Ovary (tissue), 10 donors: ENCODE measurements at regions of chr18 and their contacts with region 1.

Region 1: DNA sequence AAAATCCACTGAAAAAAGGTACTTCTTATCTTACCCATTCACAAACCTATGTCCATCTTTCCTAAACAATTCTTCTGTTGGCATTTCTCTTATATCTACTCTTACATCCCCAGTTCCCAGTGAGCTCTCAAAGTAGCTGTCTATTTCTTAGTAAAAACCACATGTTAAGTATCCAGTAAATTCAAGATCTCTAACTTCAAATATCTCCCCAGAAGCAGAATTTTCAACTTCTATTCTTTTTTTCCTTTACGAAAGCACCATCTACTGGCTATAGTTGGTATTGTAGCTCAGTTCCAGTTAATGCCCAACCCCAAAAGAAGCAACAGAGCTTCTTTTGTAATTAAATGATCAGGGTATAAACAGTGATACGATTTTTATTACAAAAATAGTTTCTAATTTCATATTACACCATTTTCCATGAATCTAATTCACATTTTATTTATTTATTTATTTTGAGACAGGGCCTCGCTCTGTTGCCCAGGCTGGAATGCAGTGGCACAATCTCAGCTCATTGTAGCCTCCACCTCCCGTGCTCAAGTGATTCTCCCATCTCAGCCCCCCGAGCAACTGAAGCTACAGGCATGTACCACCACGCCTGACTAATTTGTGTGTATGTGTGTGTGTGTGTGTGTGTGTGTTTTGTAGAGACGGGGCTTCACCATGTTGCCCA is 28.5 kb downstream of the HRH4 start:
- DNase-seq: no peak
- H3K4me3 ChIP-seq: no peak overlapping the region
- H3K27ac ChIP-seq: no peak overlapping the region
- H3K4me1 ChIP-seq: peaks cover 2% of the 10 kb centered on the region
- H3K27me3 ChIP-seq: no peaks in the 10 kb centered on the region
- CTCF ChIP-seq: peak; percentile 36 to 67 (median 56)
- EP300 ChIP-seq: no peak
- POLR2A ChIP-seq: no peak

Region 2: GRCh38 chr18:24362758-24363157 is 126.2 kb before region 1 on chr18:
- intact Hi-C with region 1: loop called in 3 of 4 experiments (anchors 2 to 5 kb)
- DNase-seq: no peak
- H3K4me3 ChIP-seq: no peak overlapping the region
- H3K27ac ChIP-seq: no peak overlapping the region
- H3K4me1 ChIP-seq: no peaks in the 10 kb centered on the region
- H3K27me3 ChIP-seq: no peaks in the 10 kb centered on the region
- CTCF ChIP-seq: no peak
- EP300 ChIP-seq: no peak
- POLR2A ChIP-seq: no peak

Region 3: GRCh38 chr18:24754572-24754971 is 265.6 kb after region 1 on chr18:
- intact Hi-C with region 1: no loop called
- DNase-seq: no peak
- H3K4me3 ChIP-seq: no peak overlapping the region
- H3K27ac ChIP-seq: no peak overlapping the region
- H3K4me1 ChIP-seq: no peaks in the 10 kb centered on the region
- H3K27me3 ChIP-seq: no peaks in the 10 kb centered on the region
- CTCF ChIP-seq: no peak
- EP300 ChIP-seq: no peak
- POLR2A ChIP-seq: no peak